ENCODE measurements at regions of chr2 and their contacts with region 1.

Region 1: DNA sequence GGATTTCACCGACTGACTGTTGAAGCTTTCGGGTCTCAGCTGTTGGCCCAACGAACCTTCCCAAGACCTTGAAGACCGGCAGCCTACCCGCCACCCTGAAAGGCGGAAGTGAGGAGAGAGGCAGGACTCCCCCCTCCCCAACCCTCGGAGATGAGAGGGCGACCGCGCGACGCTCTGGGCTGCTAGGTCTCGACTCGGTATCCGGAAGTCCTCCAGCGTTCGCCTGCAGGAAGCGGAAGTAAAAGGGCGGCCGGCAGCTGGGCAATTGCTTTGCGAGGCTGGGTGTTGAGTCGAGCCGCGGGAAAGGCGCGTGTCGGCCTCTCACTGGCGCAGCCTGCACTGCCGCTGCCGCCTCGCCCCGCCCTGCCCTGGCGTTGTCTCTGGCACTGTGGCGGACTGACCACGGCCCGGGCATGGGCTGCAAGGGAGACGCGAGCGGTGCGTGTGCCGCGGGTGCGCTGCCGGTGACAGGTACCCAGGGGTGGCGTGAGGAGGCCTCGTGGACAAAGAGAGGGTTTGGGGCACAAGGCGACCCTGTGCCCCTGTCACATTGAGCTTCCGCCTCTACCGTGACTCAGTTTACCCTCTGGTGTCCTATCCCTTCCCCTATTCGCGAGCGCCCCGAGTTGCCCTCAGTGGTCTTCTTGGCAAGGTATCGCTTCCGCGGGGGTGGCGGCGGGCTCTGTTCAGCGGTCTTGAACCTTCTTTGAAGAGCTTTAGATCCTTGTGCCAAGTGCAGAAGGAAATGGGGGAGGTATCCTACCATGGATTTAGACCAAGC is at the start of gene UGGT1:
- DNase-seq: peak; percentile 96
- H3K4me3 ChIP-seq: peak within 1 kb of the TSS; percentile 98
- H3K27ac ChIP-seq: peak within 1 kb of the TSS; percentile 78
- H3K4me1 ChIP-seq: no peaks in the 10 kb centered on the region
- H3K27me3 ChIP-seq: no peaks in the 10 kb centered on the region
- CTCF ChIP-seq: no peak
- total RNA-seq, gene UGGT1: 41.7 to 56.0 TPM

Region 2: GRCh38 chr2:127859712-127860085 is 231.4 kb before region 1 on chr2:
- intact Hi-C with region 1: loop called (anchors 10 kb)
- DNase-seq: peak; percentile 84
- H3K4me3 ChIP-seq: no peak overlapping the region
- H3K27ac ChIP-seq: no peak overlapping the region
- H3K4me1 ChIP-seq: peaks cover 4% of the 10 kb centered on the region
- H3K27me3 ChIP-seq: no peaks in the 10 kb centered on the region
- CTCF ChIP-seq: no peak

Region 3: DNA sequence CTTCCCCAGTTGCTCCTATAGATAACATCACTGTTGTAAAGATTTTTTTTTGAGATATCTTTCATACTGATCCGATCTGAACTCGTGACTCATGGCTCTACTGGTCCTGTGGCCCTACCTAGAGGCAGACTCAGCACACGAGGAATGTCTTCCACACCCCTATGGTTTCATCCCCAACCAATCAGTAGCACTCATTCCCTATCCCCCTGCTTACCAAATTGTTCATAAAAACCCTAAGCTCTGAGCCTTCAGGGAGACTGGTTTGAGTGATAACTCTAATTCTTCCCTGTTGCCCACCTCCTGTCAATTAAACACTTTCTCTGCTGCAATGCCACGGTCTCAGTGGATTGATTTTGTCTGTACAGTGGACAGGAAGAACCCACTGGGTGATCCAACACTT is 59.0 kb before region 1 on chr2:
- intact Hi-C with region 1: loop called (anchors 5 kb)
- DNase-seq: no peak
- H3K4me3 ChIP-seq: no peak overlapping the region
- H3K27ac ChIP-seq: no peak overlapping the region
- H3K4me1 ChIP-seq: no peaks in the 10 kb centered on the region
- H3K27me3 ChIP-seq: no peaks in the 10 kb centered on the region
- CTCF ChIP-seq: no peak